Naive thymus-derived CD4-positive, alpha-beta T cell (primary cell): ENCODE measurements at regions of chr16 and their contacts with region 1.

Region 1: GRCh38 chr16:3443108-3444031 is at the starts of genes NAA60 and ZNF597:
- DNase-seq: peak; percentile 38 to 86 (median 79)
- ATAC-seq: peak; percentile 96
- H3K4me3 ChIP-seq: peak within 1 kb of the TSS; percentile 47
- H3K4me3 Mint-ChIP-seq: peak within 1 kb of the TSS; percentile 88 to 100 (median 96)
- H3K27ac ChIP-seq: peak within 1 kb of the TSS; percentile 89
- H3K27ac Mint-ChIP-seq: peak within 1 kb of the TSS; percentile 82 to 98 (median 96)
- H3K4me1 ChIP-seq: peaks cover 5 to 15% of the 10 kb centered on the region in 2 donors
- H3K4me1 Mint-ChIP-seq: peaks cover 0 to 46% (median 24%) of the 10 kb centered on the region in 7 donors
- H3K27me3 ChIP-seq: no peaks in the 10 kb centered on the region
- H3K27me3 Mint-ChIP-seq: peaks cover 0 to 5% (median 0%) of the 10 kb centered on the region in 5 donors
- total RNA-seq, gene NAA60: 38.7 to 63.7 (median 55.3) TPM
- total RNA-seq, gene ZNF597: 2.2 to 5.9 (median 3.8) TPM

Region 2: DNA sequence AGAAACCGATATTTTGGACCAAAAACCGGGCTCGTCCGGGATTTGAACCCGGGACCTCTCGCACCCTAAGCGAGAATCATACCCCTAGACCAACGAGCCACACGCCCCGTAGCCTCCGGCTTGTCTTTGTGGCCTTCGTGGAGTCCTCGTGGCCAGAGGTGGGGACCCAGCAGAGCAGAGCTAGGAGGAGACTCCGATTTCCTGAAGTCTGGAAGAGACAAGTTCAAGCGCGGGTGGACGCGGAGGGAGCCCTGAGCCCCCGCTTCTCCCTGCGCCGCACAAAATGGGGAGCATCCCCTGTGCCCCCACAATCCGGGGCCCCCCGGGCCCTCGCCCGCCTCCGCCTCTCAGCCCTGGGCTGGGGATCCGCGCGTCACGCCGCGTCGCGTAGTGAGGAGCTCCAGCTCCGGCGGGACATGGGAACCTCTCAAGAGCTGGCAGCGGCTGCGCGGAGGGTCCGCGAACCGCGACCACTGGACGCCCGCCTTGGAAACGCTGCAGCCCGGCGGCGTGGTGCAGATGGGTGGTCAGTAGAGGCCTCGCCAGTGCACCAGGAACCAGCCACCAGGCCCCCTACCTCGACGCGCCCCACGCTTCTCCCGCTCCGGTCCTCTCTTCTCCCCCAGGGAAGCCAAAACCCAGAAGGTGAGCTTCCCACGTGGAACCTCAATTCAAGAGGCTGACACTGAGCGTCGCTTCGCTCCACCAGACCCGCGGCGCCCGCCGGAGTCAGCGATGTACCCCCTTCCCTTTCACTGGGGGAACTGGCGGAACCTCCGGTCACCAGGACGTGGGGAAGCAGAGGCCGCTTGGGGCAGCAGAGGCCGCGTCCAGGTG is 260.5 kb before region 1 on chr16:
- CTCF ChIA-PET with region 1: no interaction called
- POLR2A ChIA-PET with region 1: interaction called, 3 read pairs
- intact Hi-C with region 1: loop called in 1 of 2 experiments (anchors 1 kb)
- DNase-seq: peak in 5 of 9 donors; percentile 32 to 71 (median 43)
- ATAC-seq: peak; percentile 41
- H3K4me3 ChIP-seq: peak overlapping the region; percentile 58
- H3K4me3 Mint-ChIP-seq: peak overlapping the region; percentile 72 to 86 (median 79)
- H3K27ac ChIP-seq: no peak overlapping the region
- H3K27ac Mint-ChIP-seq: peak overlapping the region in 7 of 9 donors; percentile 22 to 86 (median 49)
- H3K4me1 ChIP-seq: peaks cover 8 to 16% of the 10 kb centered on the region in 2 donors
- H3K4me1 Mint-ChIP-seq: peaks cover 24 to 38% (median 27%) of the 10 kb centered on the region in 7 donors
- H3K27me3 ChIP-seq: peaks cover 4 to 26% of the 10 kb centered on the region in 2 donors
- H3K27me3 Mint-ChIP-seq: peaks cover 77 to 88% (median 81%) of the 10 kb centered on the region in 5 donors

Region 3: GRCh38 chr16:3364774-3365427 is 78.5 kb before region 1 on chr16:
- CTCF ChIA-PET with region 1: no interaction called
- POLR2A ChIA-PET with region 1: interaction called, 9 read pairs
- intact Hi-C with region 1: loop called in 1 of 2 experiments (anchors 1 kb)
- DNase-seq: peak; percentile 50 to 92 (median 87)
- ATAC-seq: peak; percentile 93
- H3K4me3 ChIP-seq: peak overlapping the region; percentile 70
- H3K4me3 Mint-ChIP-seq: peak overlapping the region; percentile 37 to 92 (median 84)
- H3K27ac ChIP-seq: peak overlapping the region; percentile 79
- H3K27ac Mint-ChIP-seq: peak overlapping the region; percentile 73 to 96 (median 91)
- H3K4me1 ChIP-seq: peaks cover 0 to 6% of the 10 kb centered on the region in 2 donors
- H3K4me1 Mint-ChIP-seq: peaks cover 0 to 19% (median 12%) of the 10 kb centered on the region in 7 donors
- H3K27me3 ChIP-seq: no peaks in the 10 kb centered on the region
- H3K27me3 Mint-ChIP-seq: peaks cover 0 to 30% (median 21%) of the 10 kb centered on the region in 5 donors

Region 4: GRCh38 chr16:3611146-3611975 is 168.0 kb after region 1 on chr16 and contains the start of gene SLX4:
- CTCF ChIA-PET with region 1: no interaction called
- POLR2A ChIA-PET with region 1: no interaction called
- intact Hi-C with region 1: no loop called
- DNase-seq: peak; percentile 88 to 97 (median 95)
- ATAC-seq: peak; percentile 92
- H3K4me3 ChIP-seq: peak within 1 kb of the TSS; percentile 99
- H3K4me3 Mint-ChIP-seq: peak within 1 kb of the TSS; percentile 93 to 100 (median 99)
- H3K27ac ChIP-seq: peak within 1 kb of the TSS; percentile 90
- H3K27ac Mint-ChIP-seq: peak within 1 kb of the TSS; percentile 92 to 99 (median 98)
- H3K4me1 ChIP-seq: peaks cover 18 to 21% of the 10 kb centered on the region in 2 donors
- H3K4me1 Mint-ChIP-seq: peaks cover 37 to 70% (median 62%) of the 10 kb centered on the region in 7 donors
- H3K27me3 ChIP-seq: no peaks in the 10 kb centered on the region
- H3K27me3 Mint-ChIP-seq: no peaks in the 10 kb centered on the region
- total RNA-seq, gene SLX4: 7.1 to 12.5 (median 8.5) TPM